A549 (cell line): ENCODE measurements at regions of chr2 and their contacts with region 1.

Region 1: GRCh38 chr2:47819834-47820233 is 36.9 kb downstream of the MSH6 start:
- DNase-seq: no peak
- ATAC-seq: no peak
- H3K4me3 ChIP-seq: no peak overlapping the region
- H3K27ac ChIP-seq: no peak overlapping the region
- H3K4me1 ChIP-seq: peaks cover 6% of the 10 kb centered on the region; the same call in 1 of the 3 replicates
- CTCF ChIP-seq: no peak
- EP300 ChIP-seq: no peak
- POLR2A ChIP-seq: no peak
- RAD21 ChIP-seq: no peak

Region 2: GRCh38 chr2:47808614-47809013 is 11.2 kb before region 1 on chr2:
- CTCF ChIA-PET with region 1: interaction called, 10 read pairs
- POLR2A ChIA-PET with region 1: no interaction called
- DNase-seq: no peak
- ATAC-seq: no peak
- H3K4me3 ChIP-seq: no peak overlapping the region
- H3K27ac ChIP-seq: no peak overlapping the region
- H3K4me1 ChIP-seq: no peaks in the 10 kb centered on the region
- CTCF ChIP-seq: no peak
- EP300 ChIP-seq: no peak
- POLR2A ChIP-seq: no peak
- RAD21 ChIP-seq: no peak